Thyroid gland (tissue), 4 donors: ENCODE measurements at regions of chr3 and their contacts with region 1.

Region 1: DNA sequence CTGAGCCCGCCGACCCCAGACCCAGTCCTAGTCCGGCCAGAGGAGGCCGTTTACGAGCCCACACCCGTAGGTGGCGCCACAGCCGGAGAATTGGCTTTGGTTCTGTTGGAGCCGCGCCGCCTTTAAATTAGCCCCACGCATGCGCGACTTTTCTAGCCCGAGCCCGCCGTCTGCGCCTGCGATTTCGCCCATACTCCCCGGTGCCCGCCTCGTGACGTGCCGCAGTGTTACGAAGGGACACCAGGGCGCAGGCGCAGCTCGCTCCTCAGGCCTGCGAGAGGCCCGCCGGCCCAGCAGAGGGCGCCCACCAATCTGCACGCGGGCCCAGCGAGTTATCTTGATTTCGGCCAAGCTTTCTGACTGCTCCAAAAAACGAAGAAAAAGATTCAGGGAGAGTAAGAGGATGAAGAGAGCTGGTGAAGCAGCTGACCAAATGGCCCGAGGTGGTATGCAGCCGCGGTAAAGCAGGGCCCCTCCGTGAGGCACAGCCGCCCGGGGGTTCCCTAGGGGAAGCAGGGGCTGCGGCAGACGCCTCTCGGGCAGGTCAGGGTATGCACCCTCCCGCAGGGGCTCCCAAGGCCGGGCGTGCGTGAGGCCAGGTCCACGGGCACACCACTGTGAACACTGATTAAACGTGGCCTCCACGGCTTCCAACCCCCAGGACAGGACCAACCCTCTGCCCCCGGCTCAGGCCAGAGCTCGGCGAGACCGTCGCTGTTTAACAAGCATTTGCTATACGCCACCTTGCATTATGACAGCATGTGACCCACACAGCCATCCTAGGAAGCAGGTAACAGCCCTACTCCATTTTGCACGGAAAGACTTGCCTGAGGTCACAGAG is 32.8 kb downstream of the RPN1 start:
- DNase-seq: peak; percentile 98
- H3K4me3 ChIP-seq: peak overlapping the region; percentile 12 to 61 (median 59)
- H3K27ac ChIP-seq: peak overlapping the region; percentile 33 to 87 (median 79)
- H3K4me1 ChIP-seq: peaks cover 10 to 35% of the 10 kb centered on the region in 2 donors
- H3K27me3 ChIP-seq: no peaks in the 10 kb centered on the region
- CTCF ChIP-seq: peak; percentile 69 to 98 (median 88)
- POLR2A ChIP-seq: peak in 1 of 2 donors; percentile 32

Region 2: GRCh38 chr3:128680602-128681368 is 63.0 kb after region 1 on chr3:
- intact Hi-C with region 1: loop called (anchors 10 kb)
- DNase-seq: peak; percentile 99
- H3K4me3 ChIP-seq: peak overlapping the region; percentile 3 to 75 (median 42)
- H3K27ac ChIP-seq: peak overlapping the region; percentile 92 to 96 (median 94)
- H3K4me1 ChIP-seq: peaks cover 0 to 8% of the 10 kb centered on the region in 2 donors
- H3K27me3 ChIP-seq: no peaks in the 10 kb centered on the region
- CTCF ChIP-seq: peak; percentile 90 to 100 (median 98)
- POLR2A ChIP-seq: peak in 1 of 2 donors; percentile 82